Breast epithelium (tissue), 4 donors: ENCODE measurements at regions of chr16 and their contacts with region 1.

Region 1: DNA sequence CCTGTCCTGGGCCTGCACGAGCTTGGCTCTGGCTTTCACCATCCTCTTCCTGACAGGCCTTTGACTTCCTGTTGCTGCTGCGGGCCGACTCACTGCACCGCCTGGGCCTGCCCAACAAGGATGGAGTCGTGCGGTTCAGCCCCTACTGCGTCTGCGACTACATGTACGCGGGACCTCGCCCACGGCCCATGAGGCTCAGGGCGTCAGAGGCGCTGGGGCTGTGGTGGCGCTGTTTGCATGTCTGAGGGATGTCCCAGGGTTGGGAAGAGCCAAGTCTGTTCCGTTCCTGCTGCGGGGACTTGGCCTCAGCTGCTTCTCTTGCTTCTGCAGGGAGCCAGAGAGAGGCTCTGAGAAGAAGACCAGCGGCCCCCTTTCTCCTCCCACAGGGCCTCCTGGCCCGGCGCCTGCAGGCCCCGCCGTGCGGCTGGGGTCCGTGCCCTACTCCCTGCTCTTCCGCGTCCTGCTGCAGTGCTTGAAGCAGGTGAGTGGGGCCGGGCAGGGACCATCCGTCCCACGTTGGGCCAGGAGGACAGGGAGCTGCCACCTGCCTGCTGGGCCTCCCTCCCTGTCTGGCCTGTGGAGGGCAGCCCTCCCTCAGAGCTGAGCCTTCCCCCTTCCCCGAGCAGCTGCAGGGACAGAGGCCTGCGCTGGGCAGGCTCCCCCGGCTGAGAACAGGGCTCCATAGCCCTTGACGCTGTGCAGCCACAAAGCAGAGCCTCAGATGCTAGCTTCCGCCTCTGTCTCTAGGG is 23.8 kb downstream of the TSC2 start:
- DNase-seq: no peak
- H3K4me3 ChIP-seq: no peak overlapping the region
- H3K27ac ChIP-seq: no peak overlapping the region
- H3K4me1 ChIP-seq: no peaks in the 10 kb centered on the region
- H3K27me3 ChIP-seq: no peaks in the 10 kb centered on the region
- CTCF ChIP-seq: no peak
- POLR2A ChIP-seq: no peak

Region 2: GRCh38 chr16:2450535-2450934 is 378.9 kb after region 1 on chr16:
- intact Hi-C with region 1: loop called (anchors 5 kb)
- DNase-seq: no peak
- H3K4me3 ChIP-seq: no peak overlapping the region
- H3K27ac ChIP-seq: no peak overlapping the region
- H3K4me1 ChIP-seq: no peaks in the 10 kb centered on the region
- H3K27me3 ChIP-seq: no peaks in the 10 kb centered on the region
- CTCF ChIP-seq: no peak
- POLR2A ChIP-seq: no peak